Body of pancreas (tissue), 4 donors: ENCODE measurements at regions of chr4 and their contacts with region 1.

Region 1: DNA sequence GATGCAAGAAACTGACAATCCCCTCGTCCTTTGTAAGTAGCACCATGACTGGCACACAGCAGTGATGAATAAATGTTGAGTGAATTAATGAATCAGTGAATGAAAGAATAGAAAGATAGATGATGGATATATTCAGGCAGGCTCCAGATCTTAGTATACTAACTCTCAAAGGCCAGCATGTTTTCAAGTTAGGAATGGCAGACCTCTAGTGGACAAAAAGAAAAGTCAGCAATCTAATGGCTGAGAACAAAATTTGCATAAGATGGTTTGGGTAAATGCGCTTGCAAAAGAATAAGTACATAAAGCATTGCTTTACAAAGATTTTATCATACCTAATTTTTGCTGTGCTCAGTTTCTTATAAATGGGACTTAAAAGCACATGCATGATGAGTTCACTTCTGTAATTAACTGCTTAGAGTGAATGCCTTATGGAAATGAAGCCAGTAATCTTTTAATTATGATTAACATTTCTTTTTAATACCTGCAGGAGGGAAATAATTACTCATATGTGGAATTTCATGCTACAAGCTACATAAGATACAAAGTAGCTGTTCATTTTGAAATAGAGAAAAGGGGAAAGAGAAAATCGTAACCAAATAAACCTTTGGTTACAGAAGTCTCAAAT is 126.9 kb upstream of the GPRIN3 start:
- DNase-seq: peak in 1 of 4 donors; percentile 7
- ATAC-seq: peak; percentile 81
- H3K4me3 ChIP-seq: no peak overlapping the region
- H3K27ac ChIP-seq: no peak overlapping the region
- H3K4me1 ChIP-seq: no peaks in the 10 kb centered on the region
- H3K27me3 ChIP-seq: no peaks in the 10 kb centered on the region
- CTCF ChIP-seq: peak; percentile 58 to 92 (median 88)
- POLR2A ChIP-seq: no peak

Region 2: GRCh38 chr4:89164400-89164799 is 270.1 kb before region 1 on chr4:
- intact Hi-C with region 1: loop called (anchors 10 kb)
- DNase-seq: no peak
- ATAC-seq: no peak
- H3K4me3 ChIP-seq: no peak overlapping the region
- H3K27ac ChIP-seq: no peak overlapping the region
- H3K4me1 ChIP-seq: no peaks in the 10 kb centered on the region
- H3K27me3 ChIP-seq: no peaks in the 10 kb centered on the region
- CTCF ChIP-seq: peak in 2 of 7 experiments; percentile 7 to 17
- POLR2A ChIP-seq: no peak

Region 3: GRCh38 chr4:89226665-89227574 is 207.6 kb before region 1 on chr4:
- intact Hi-C with region 1: loop called (anchors 2 kb)
- DNase-seq: peak; percentile 92 to 95 (median 94)
- ATAC-seq: peak; percentile 100
- H3K4me3 ChIP-seq: no peak overlapping the region
- H3K27ac ChIP-seq: peak overlapping the region in 2 of 4 donors; percentile 39 to 45
- H3K4me1 ChIP-seq: peaks cover 10% of the 10 kb centered on the region
- H3K27me3 ChIP-seq: no peaks in the 10 kb centered on the region
- CTCF ChIP-seq: peak; percentile 40 to 96 (median 94)
- POLR2A ChIP-seq: no peak